Psoas muscle (tissue), 8 donors: ENCODE measurements at regions of chr1 and their contacts with region 1.

Region 1: DNA sequence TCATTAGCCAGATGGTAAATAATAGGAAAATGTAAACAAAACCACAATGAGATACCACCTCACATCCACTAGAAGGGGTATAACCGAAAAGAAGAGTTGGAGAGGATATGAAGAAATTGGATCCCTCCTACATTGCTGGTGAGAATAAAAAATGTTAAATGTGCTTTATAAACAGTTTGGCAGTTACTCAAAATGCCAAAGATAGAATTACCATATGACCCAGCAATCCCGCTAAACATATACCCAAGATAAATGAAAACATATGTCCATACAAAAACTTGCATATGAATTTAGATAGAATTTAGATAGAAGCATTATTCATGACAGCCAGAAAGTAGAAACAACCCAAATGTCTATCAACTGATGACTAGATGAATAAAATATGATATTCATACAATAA is 4.4 kb upstream of the FMO2 start:
- DNase-seq: no peak
- ATAC-seq: no peak
- H3K4me3 ChIP-seq: no peak overlapping the region
- H3K27ac ChIP-seq: no peak overlapping the region
- H3K4me1 ChIP-seq: no peaks in the 10 kb centered on the region
- H3K27me3 ChIP-seq: no peaks in the 10 kb centered on the region
- CTCF ChIP-seq: no peak

Region 2: GRCh38 chr1:171138980-171139379 is 41.7 kb before region 1 on chr1:
- intact Hi-C with region 1: loop called in 1 of 2 experiments (anchors 5 kb)
- DNase-seq: no peak
- ATAC-seq: peak in 1 of 4 donors; percentile 21
- H3K4me3 ChIP-seq: no peak overlapping the region
- H3K27ac ChIP-seq: no peak overlapping the region
- H3K4me1 ChIP-seq: peaks cover 8% of the 10 kb centered on the region
- H3K27me3 ChIP-seq: no peaks in the 10 kb centered on the region
- CTCF ChIP-seq: no peak